Posterior vena cava (tissue), 2 donors: ENCODE measurements at regions of chr1 and their contacts with region 1.

Region 1: GRCh38 chr1:11735854-11736745 is at the start of gene AGTRAP:
- DNase-seq: peak; percentile 100
- total RNA-seq, gene AGTRAP: 35.1 to 39.1 TPM

Region 2: GRCh38 chr1:11671544-11672286 is 64.4 kb before region 1 on chr1:
- intact Hi-C with region 1: no loop called
- DNase-seq: no peak

Region 3: DNA sequence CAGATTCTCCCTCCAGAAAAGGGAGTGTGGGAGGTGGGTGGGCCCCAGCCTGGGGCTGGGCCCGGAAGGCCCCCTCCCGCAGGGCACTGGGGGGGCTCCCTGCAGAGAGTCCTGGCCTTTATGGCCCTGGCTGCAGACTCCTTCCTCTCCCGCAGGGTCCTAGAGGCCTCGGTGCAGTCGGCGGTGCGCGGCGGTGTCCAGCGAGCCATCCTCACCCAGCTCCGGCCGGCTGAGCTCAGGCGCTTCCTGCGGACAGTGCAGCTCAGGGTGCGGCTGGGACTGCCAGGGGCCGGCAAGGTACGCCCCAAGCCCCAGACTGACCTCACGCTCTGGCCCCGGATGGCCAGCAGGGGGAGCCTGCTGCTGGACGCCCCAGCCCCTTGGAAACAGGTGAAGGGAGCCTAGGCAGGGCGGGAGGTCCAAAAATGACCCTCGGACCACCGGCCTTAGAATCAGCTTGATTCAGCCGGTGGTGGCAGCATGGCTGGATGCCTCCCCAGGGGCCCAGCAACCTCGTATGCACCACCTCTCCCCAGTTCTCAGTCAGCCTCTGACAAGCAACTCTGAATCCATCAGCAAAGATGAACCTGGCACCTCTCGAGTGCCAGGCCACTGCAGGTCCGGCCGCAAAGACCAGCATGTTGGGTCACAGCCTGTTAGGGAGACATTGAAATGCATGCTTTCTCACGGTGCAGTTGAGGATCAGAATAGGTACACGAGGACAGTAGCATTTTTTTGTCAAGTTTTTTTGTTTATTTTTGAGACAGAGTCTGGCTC is 49.1 kb after region 1 on chr1:
- intact Hi-C with region 1: loop called in 1 of 2 experiments (anchors 10 kb)
- DNase-seq: peak; percentile 90